Caco-2 (cell line): ENCODE measurements at regions of chr11 and their contacts with region 1.

Region 1: GRCh38 chr11:10322830-10323792 is 18.2 kb downstream of the ADM start:
- DNase-seq: peak; percentile 70 to 72
- H3K4me3 ChIP-seq: no peak overlapping the region
- H3K4me3 Mint-ChIP-seq: peak overlapping the region; percentile 56
- H3K27ac Mint-ChIP-seq: peak overlapping the region; percentile 90
- H3K4me1 ChIP-seq: peaks cover 65% of the 10 kb centered on the region
- H3K4me1 Mint-ChIP-seq: peaks cover 41% of the 10 kb centered on the region
- H3K27me3 ChIP-seq: no peaks in the 10 kb centered on the region
- H3K27me3 Mint-ChIP-seq: no peaks in the 10 kb centered on the region
- CTCF ChIP-seq: peak; percentile 42 to 50

Region 2: DNA sequence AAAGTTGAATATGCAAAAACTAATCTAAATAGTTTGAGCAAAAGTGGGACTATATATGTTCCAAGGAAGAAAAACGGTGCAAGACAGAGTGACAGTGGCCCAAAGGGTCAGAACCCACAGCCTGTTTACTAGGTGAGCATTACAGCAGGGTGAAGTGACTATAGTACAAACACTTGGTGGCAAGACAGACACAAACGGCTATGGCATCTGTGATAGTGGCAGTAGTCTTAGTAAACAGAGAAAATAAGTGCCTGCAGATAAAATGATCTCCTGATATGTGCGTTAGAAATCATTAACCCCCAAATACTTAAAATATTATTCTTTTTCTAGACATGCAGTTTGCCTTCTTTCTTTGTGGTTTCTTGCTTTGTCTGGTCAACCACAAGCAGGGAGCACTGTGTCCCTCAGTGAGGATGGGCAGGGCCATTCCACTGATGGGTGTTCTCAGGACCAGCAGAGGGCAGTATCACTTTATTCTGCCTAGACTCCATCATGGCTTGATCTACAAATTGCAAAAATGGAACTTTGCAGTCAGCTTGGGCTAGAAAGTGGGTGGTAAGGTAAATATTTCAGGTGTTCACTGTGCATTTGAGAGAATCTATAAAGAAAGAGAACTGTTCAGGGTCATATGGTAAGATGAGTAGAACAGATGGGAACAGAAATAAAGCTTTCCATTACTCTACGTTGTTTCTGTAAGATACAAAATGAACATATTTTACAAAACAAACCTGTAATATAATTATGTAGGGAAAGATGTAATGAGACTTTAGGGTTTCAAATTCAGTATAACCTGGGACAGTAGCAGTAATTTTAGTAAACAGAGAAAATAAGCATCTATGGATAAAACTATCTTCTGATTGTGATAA is 461.0 kb before region 1 on chr11:
- CTCF ChIA-PET with region 1: no interaction called
- POLR2A ChIA-PET with region 1: no interaction called
- intact Hi-C with region 1: loop called (anchors 2 kb)
- DNase-seq: peak; percentile 77 to 82
- H3K4me3 ChIP-seq: no peak overlapping the region
- H3K4me3 Mint-ChIP-seq: no peak overlapping the region
- H3K27ac Mint-ChIP-seq: no peak overlapping the region
- H3K4me1 ChIP-seq: peaks cover 60% of the 10 kb centered on the region
- H3K4me1 Mint-ChIP-seq: peaks cover 41% of the 10 kb centered on the region
- H3K27me3 ChIP-seq: no peaks in the 10 kb centered on the region
- H3K27me3 Mint-ChIP-seq: no peaks in the 10 kb centered on the region
- CTCF ChIP-seq: peak; percentile 77 to 87

Region 3: GRCh38 chr11:9972989-9973388 is 350.1 kb before region 1 on chr11:
- CTCF ChIA-PET with region 1: no interaction called
- POLR2A ChIA-PET with region 1: no interaction called
- intact Hi-C with region 1: loop called (anchors 5 kb)
- DNase-seq: peak in 1 of 2 experiments; percentile 41
- H3K4me3 ChIP-seq: no peak overlapping the region
- H3K4me3 Mint-ChIP-seq: no peak overlapping the region
- H3K27ac Mint-ChIP-seq: no peak overlapping the region
- H3K4me1 ChIP-seq: peaks cover 18% of the 10 kb centered on the region
- H3K4me1 Mint-ChIP-seq: peaks cover 6% of the 10 kb centered on the region
- H3K27me3 ChIP-seq: no peaks in the 10 kb centered on the region
- H3K27me3 Mint-ChIP-seq: no peaks in the 10 kb centered on the region
- CTCF ChIP-seq: peak; percentile 62 to 82

Region 4: DNA sequence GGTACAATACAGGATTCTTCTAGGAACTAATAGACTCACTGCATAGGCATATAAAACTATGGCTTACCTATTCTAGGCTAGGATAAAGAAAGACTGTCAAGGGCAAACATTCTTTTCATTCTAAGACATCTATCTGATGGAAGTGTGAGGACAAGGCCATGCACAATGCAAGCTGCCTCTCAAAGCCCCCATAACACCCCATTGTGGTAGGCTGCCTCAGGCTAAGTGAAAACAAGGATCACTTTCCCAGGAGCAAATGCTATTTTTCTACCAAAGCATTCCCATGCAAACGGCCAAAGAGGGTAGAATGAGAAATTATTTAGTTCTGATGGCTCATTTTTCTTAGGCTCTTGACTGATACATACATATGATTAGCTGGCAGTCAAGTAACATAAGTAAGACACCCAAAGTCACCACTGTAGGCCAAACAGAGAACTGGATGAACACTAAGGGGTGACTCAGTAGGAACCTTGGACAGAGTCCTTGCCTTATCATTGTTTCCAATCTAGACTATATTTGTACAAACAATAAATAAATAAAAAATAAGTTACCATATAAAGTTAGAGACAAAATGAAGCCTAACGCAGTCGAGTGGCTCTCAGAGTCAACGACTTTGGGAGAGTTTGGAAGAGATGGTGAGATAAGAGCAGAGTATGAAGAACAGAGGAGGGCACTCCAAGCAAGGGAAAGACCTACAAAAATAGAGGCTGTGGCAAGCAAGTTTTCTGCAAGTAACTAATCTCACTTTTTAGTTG is 332.7 kb before region 1 on chr11:
- CTCF ChIA-PET with region 1: no interaction called
- POLR2A ChIA-PET with region 1: no interaction called
- intact Hi-C with region 1: loop called (anchors 2 kb)
- DNase-seq: peak in 1 of 2 experiments; percentile 17
- H3K4me3 ChIP-seq: no peak overlapping the region
- H3K4me3 Mint-ChIP-seq: no peak overlapping the region
- H3K27ac Mint-ChIP-seq: no peak overlapping the region
- H3K4me1 ChIP-seq: no peaks in the 10 kb centered on the region
- H3K4me1 Mint-ChIP-seq: no peaks in the 10 kb centered on the region
- H3K27me3 ChIP-seq: no peaks in the 10 kb centered on the region
- H3K27me3 Mint-ChIP-seq: no peaks in the 10 kb centered on the region
- CTCF ChIP-seq: peak in 1 of 2 experiments; percentile 43

Region 5: DNA sequence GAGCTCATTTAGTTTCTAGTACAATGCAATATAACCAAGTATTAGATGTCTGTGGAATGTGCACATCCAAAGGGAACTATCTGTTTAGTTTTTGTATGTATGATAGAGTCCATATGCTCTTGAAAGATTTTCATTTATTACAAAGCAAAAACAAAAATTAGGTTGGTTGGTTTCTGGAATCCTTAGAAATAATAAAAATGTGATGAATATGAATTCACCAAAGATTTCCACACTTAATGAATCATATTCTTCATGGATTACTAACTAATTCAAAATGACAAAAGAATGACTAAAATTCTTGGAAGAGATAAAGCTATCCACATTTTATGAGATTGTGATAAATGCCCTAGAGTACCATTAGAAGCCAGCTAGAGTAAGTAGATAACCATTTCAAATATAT is 290.2 kb before region 1 on chr11:
- CTCF ChIA-PET with region 1: no interaction called
- POLR2A ChIA-PET with region 1: no interaction called
- intact Hi-C with region 1: no loop called
- DNase-seq: no peak
- H3K4me3 ChIP-seq: no peak overlapping the region
- H3K4me3 Mint-ChIP-seq: no peak overlapping the region
- H3K27ac Mint-ChIP-seq: no peak overlapping the region
- H3K4me1 ChIP-seq: no peaks in the 10 kb centered on the region
- H3K4me1 Mint-ChIP-seq: no peaks in the 10 kb centered on the region
- H3K27me3 ChIP-seq: no peaks in the 10 kb centered on the region
- H3K27me3 Mint-ChIP-seq: no peaks in the 10 kb centered on the region
- CTCF ChIP-seq: no peak

Region 6: DNA sequence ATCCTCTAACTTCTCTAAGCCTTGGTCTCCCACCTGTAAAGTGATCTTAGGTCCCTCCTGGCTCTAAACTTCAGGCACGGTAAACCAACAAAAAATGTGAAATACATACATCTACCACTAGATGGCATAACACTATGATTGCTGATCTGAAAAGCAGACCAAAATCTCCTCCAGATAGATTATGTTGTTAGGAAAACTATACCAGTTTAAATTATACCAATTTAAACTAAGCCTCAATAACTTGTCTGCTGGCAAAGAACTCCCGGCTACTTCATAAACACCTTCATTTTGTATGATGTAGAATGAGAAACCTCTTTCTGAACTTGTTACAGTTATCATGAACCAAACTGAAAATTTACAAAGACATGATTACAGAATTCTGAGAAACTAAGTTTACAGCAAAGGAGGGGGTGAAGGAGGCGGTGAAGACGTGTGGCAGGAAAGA is 115.0 kb before region 1 on chr11:
- CTCF ChIA-PET with region 1: no interaction called
- POLR2A ChIA-PET with region 1: no interaction called
- intact Hi-C with region 1: loop called (anchors 1 kb)
- DNase-seq: peak in 1 of 2 experiments; percentile 58
- H3K4me3 ChIP-seq: no peak overlapping the region
- H3K4me3 Mint-ChIP-seq: no peak overlapping the region
- H3K27ac Mint-ChIP-seq: no peak overlapping the region
- H3K4me1 ChIP-seq: no peaks in the 10 kb centered on the region; the same call in 1 of the 2 replicates
- H3K4me1 Mint-ChIP-seq: peaks cover 7% of the 10 kb centered on the region
- H3K27me3 ChIP-seq: no peaks in the 10 kb centered on the region
- H3K27me3 Mint-ChIP-seq: no peaks in the 10 kb centered on the region
- CTCF ChIP-seq: peak; percentile 64 to 70

Region 7: GRCh38 chr11:10387206-10388083 is 64.3 kb after region 1 on chr11:
- CTCF ChIA-PET with region 1: interaction called, 3 read pairs
- POLR2A ChIA-PET with region 1: interaction called, 3 read pairs
- intact Hi-C with region 1: loop called (anchors 2 kb)
- DNase-seq: peak; percentile 48 to 72
- H3K4me3 ChIP-seq: no peak overlapping the region
- H3K4me3 Mint-ChIP-seq: peak overlapping the region; percentile 62
- H3K27ac Mint-ChIP-seq: peak overlapping the region; percentile 71
- H3K4me1 ChIP-seq: peaks cover 60% of the 10 kb centered on the region
- H3K4me1 Mint-ChIP-seq: peaks cover 55% of the 10 kb centered on the region
- H3K27me3 ChIP-seq: no peaks in the 10 kb centered on the region
- H3K27me3 Mint-ChIP-seq: no peaks in the 10 kb centered on the region
- CTCF ChIP-seq: no peak